ENCODE measurements at regions of chr1 and their contacts with region 1.

Region 1: GRCh38 chr1:121471523-121471922 is 286.7 kb downstream of the SRGAP2C start:
- DNase-seq: no peak
- ATAC-seq: peak; percentile 24
- H3K4me3 Mint-ChIP-seq: no peak overlapping the region
- H3K27ac Mint-ChIP-seq: no peak overlapping the region
- H3K4me1 Mint-ChIP-seq: peaks cover 23% of the 10 kb centered on the region
- H3K27me3 Mint-ChIP-seq: peaks cover 2% of the 10 kb centered on the region
- CTCF ChIP-seq: no peak

Region 2: GRCh38 chr1:121418369-121419049 is 53.0 kb before region 1 on chr1:
- CTCF ChIA-PET with region 1: no interaction called
- POLR2A ChIA-PET with region 1: no interaction called
- intact Hi-C with region 1: loop called (anchors 10 kb)
- DNase-seq: no peak
- ATAC-seq: no peak
- H3K4me3 Mint-ChIP-seq: no peak overlapping the region
- H3K27ac Mint-ChIP-seq: no peak overlapping the region
- H3K4me1 Mint-ChIP-seq: peaks cover 3% of the 10 kb centered on the region
- H3K27me3 Mint-ChIP-seq: peaks cover 9% of the 10 kb centered on the region
- CTCF ChIP-seq: no peak

Measured in activated CD8-positive, alpha-beta T cell treated with anti-CD3 and anti-CD28 coated beads for 36 hours (primary cell).